Naive thymus-derived CD4-positive, alpha-beta T cell (primary cell): ENCODE measurements at regions of chr17 and their contacts with region 1.

Region 1: GRCh38 chr17:41548844-41549595 is 20.9 kb upstream of the KRT19 start:
- DNase-seq: peak; percentile 72 to 87 (median 82)
- ATAC-seq: peak; percentile 94
- H3K4me3 ChIP-seq: peak overlapping the region; percentile 43
- H3K4me3 Mint-ChIP-seq: peak overlapping the region; percentile 48 to 77 (median 68)
- H3K27ac ChIP-seq: peak overlapping the region; percentile 37
- H3K27ac Mint-ChIP-seq: peak overlapping the region; percentile 13 to 85 (median 73)
- H3K4me1 ChIP-seq: peaks cover 10 to 17% of the 10 kb centered on the region in 2 donors
- H3K4me1 Mint-ChIP-seq: peaks cover 8 to 18% (median 14%) of the 10 kb centered on the region in 7 donors
- H3K27me3 ChIP-seq: no peaks in the 10 kb centered on the region
- H3K27me3 Mint-ChIP-seq: peaks cover 0 to 13% (median 8%) of the 10 kb centered on the region in 5 donors

Region 2: DNA sequence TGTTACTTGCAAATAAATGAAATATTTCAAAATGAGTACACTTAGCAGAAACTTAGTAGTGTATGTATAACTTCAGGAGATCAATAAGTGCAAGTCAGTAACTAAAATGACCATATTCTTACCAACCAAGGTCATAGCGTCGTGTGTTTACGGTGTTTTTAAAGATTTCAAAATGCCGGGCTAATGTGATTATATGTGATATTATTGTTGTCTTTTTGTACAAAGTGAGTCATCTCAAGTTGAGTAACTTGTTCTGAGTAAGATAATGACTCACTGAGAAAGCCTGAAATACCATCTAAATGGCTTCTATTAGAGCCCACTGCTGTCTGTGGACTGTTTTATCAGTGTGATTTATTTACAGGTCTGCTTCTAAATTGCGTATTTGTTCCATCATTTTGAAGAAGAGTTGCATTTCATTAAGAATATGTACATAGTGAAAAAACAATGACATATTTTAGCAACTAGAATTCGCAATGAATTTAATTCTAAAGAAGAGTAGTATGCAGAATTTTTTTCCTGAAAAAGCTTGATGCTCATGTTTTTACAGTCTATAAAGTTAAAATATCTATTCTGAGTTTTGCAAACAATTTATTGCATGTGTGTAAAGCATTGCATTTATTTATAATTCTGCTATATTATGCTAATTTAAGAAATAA is 694.7 kb before region 1 on chr17:
- CTCF ChIA-PET with region 1: interaction called, 13 read pairs
- POLR2A ChIA-PET with region 1: no interaction called
- intact Hi-C with region 1: loop called in 1 of 2 experiments (anchors 1 kb)
- DNase-seq: no peak
- ATAC-seq: no peak
- H3K4me3 ChIP-seq: no peak overlapping the region
- H3K4me3 Mint-ChIP-seq: no peak overlapping the region
- H3K27ac ChIP-seq: no peak overlapping the region
- H3K27ac Mint-ChIP-seq: no peak overlapping the region
- H3K4me1 ChIP-seq: no peaks in the 10 kb centered on the region
- H3K4me1 Mint-ChIP-seq: peaks cover 0 to 6% (median 0%) of the 10 kb centered on the region in 7 donors
- H3K27me3 ChIP-seq: no peaks in the 10 kb centered on the region
- H3K27me3 Mint-ChIP-seq: peaks cover 19 to 53% (median 27%) of the 10 kb centered on the region in 5 donors

Region 3: GRCh38 chr17:41098476-41098875 is 450.5 kb before region 1 on chr17:
- CTCF ChIA-PET with region 1: no interaction called
- POLR2A ChIA-PET with region 1: no interaction called
- intact Hi-C with region 1: loop called in 1 of 2 experiments (anchors 1 kb)
- DNase-seq: no peak
- ATAC-seq: no peak
- H3K4me3 ChIP-seq: no peak overlapping the region
- H3K4me3 Mint-ChIP-seq: no peak overlapping the region
- H3K27ac ChIP-seq: no peak overlapping the region
- H3K27ac Mint-ChIP-seq: no peak overlapping the region
- H3K4me1 ChIP-seq: no peaks in the 10 kb centered on the region
- H3K4me1 Mint-ChIP-seq: peaks cover 0 to 27% (median 15%) of the 10 kb centered on the region in 7 donors
- H3K27me3 ChIP-seq: no peaks in the 10 kb centered on the region
- H3K27me3 Mint-ChIP-seq: peaks cover 10 to 15% (median 11%) of the 10 kb centered on the region in 5 donors

Region 4: DNA sequence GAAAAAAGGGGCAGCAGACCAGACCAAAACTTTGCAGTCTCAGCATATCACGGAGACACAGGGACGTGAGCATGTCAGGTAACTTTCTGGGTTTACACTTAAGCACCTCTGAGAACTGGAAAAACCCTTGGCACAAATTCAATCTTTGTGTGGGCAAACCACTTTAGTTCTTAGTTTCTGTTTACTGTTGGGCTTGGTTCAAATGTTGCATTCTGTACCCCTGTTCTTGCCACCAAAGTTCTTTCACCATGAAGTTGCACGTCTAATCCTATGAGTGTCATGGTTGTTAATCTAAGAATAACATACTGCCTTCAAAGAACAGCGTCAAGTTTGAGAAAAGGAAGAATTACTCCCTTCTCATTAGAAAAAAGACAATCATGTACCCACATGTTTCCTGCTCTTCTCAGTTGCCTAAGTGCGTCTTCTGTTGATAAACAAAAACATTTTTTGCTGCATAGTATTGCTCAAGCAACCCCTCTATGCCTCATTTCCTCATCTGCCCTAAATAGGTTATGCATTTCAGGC is 210.0 kb before region 1 on chr17:
- CTCF ChIA-PET with region 1: interaction called, 5 read pairs
- POLR2A ChIA-PET with region 1: interaction called, 3 read pairs
- intact Hi-C with region 1: loop called in 1 of 2 experiments (anchors 1 kb)
- DNase-seq: peak in 7 of 9 donors; percentile 71 to 93 (median 88)
- ATAC-seq: peak; percentile 90
- H3K4me3 ChIP-seq: no peak overlapping the region
- H3K4me3 Mint-ChIP-seq: peak overlapping the region; percentile 28 to 81 (median 74)
- H3K27ac ChIP-seq: peak overlapping the region; percentile 87
- H3K27ac Mint-ChIP-seq: peak overlapping the region; percentile 92 to 99 (median 96)
- H3K4me1 ChIP-seq: peaks cover 78 to 85% of the 10 kb centered on the region in 2 donors
- H3K4me1 Mint-ChIP-seq: peaks cover 47 to 99% (median 85%) of the 10 kb centered on the region in 7 donors
- H3K27me3 ChIP-seq: no peaks in the 10 kb centered on the region
- H3K27me3 Mint-ChIP-seq: peaks cover 0 to 14% (median 0%) of the 10 kb centered on the region in 5 donors

Region 5: DNA sequence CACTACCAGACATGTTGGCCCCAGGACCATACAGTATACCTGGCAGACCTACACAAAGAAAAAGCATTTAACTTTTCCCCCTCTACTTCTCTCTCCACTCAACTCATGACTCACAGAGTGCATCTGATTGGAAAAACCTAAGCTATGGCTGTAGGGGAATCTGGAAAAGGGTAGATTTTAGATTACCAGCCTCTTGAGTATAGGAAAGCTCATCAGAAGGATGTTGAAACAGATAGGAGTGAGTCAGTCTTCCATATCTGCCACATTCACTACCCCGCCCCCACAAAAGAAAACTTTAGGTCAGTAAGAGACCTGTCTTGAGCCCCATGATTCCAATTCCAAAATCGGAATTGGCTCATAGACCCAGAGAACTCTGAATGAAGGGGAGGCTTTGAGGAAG is 10.5 kb after region 1 on chr17:
- CTCF ChIA-PET with region 1: interaction called, 13 read pairs
- POLR2A ChIA-PET with region 1: no interaction called
- intact Hi-C with region 1: no loop called
- DNase-seq: no peak
- ATAC-seq: no peak
- H3K4me3 ChIP-seq: no peak overlapping the region
- H3K4me3 Mint-ChIP-seq: no peak overlapping the region
- H3K27ac ChIP-seq: no peak overlapping the region
- H3K27ac Mint-ChIP-seq: no peak overlapping the region
- H3K4me1 ChIP-seq: no peaks in the 10 kb centered on the region
- H3K4me1 Mint-ChIP-seq: no peaks in the 10 kb centered on the region
- H3K27me3 ChIP-seq: no peaks in the 10 kb centered on the region
- H3K27me3 Mint-ChIP-seq: peaks cover 28 to 45% (median 32%) of the 10 kb centered on the region in 5 donors

Region 6: DNA sequence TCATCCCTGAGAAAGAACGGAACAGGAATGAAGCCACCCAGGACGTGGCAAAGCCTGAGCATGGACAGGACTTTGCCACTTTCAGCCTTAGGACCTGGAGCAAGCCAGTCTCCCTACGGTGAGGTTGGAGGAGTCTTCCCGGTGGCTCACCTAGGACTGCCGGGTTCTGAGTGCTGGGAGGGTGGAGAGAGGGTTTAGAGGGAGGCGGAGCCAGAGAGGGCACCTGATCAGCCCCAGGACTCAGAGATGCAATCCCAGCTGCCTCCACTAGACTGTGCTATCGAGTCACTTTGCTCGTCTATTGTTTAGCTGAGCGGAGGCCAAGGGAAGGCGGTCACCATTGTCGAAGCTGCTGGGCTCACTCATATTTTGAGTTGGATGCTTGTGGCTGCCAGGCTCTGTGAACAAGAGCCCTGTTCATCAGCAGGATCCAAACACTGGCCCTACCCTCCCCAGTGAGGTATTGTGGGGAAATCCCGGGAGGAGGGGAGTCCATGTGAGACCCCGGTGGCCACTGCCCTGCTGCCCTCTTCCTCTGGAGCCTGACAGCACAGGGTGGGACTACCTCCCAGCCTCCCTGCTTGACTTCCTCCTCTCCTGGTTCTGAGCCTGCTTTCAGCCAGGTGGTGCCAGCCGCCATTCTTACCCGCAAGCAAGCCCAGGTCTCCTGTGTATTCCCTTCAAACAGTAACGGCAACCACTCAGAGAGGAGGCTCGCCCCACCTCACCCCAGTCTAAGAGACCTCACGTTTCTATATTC is 30.6 kb after region 1 on chr17:
- CTCF ChIA-PET with region 1: no interaction called
- POLR2A ChIA-PET with region 1: no interaction called
- intact Hi-C with region 1: loop called in 1 of 2 experiments (anchors 2 kb)
- DNase-seq: peak in 8 of 9 donors; percentile 12 to 71 (median 36)
- ATAC-seq: peak; percentile 90
- H3K4me3 ChIP-seq: no peak overlapping the region
- H3K4me3 Mint-ChIP-seq: no peak overlapping the region
- H3K27ac ChIP-seq: no peak overlapping the region
- H3K27ac Mint-ChIP-seq: no peak overlapping the region
- H3K4me1 ChIP-seq: no peaks in the 10 kb centered on the region
- H3K4me1 Mint-ChIP-seq: peaks cover 0 to 3% (median 0%) of the 10 kb centered on the region in 7 donors
- H3K27me3 ChIP-seq: peaks cover 0 to 4% of the 10 kb centered on the region in 2 donors
- H3K27me3 Mint-ChIP-seq: peaks cover 22 to 52% (median 28%) of the 10 kb centered on the region in 5 donors

Region 7: GRCh38 chr17:41688699-41689496 is 139.9 kb after region 1 on chr17 and contains the start of gene EIF1:
- CTCF ChIA-PET with region 1: no interaction called
- POLR2A ChIA-PET with region 1: interaction called, 11 read pairs
- intact Hi-C with region 1: no loop called
- DNase-seq: peak; percentile 98 to 100 (median 99)
- ATAC-seq: peak; percentile 85
- H3K4me3 ChIP-seq: peak within 1 kb of the TSS; percentile 86
- H3K4me3 Mint-ChIP-seq: peak within 1 kb of the TSS; percentile 90 to 99 (median 96)
- H3K27ac ChIP-seq: peak within 1 kb of the TSS; percentile 99
- H3K27ac Mint-ChIP-seq: peak within 1 kb of the TSS; percentile 98 to 99 (median 99)
- H3K4me1 ChIP-seq: peaks cover 22 to 25% of the 10 kb centered on the region in 2 donors
- H3K4me1 Mint-ChIP-seq: peaks cover 13 to 43% (median 35%) of the 10 kb centered on the region in 7 donors
- H3K27me3 ChIP-seq: no peaks in the 10 kb centered on the region
- H3K27me3 Mint-ChIP-seq: peaks cover 0 to 9% (median 0%) of the 10 kb centered on the region in 5 donors
- total RNA-seq, gene EIF1: 710 to 2,222 (median 934) TPM